ENCODE measurements at regions of chr1 and their contacts with region 1.

Region 1: DNA sequence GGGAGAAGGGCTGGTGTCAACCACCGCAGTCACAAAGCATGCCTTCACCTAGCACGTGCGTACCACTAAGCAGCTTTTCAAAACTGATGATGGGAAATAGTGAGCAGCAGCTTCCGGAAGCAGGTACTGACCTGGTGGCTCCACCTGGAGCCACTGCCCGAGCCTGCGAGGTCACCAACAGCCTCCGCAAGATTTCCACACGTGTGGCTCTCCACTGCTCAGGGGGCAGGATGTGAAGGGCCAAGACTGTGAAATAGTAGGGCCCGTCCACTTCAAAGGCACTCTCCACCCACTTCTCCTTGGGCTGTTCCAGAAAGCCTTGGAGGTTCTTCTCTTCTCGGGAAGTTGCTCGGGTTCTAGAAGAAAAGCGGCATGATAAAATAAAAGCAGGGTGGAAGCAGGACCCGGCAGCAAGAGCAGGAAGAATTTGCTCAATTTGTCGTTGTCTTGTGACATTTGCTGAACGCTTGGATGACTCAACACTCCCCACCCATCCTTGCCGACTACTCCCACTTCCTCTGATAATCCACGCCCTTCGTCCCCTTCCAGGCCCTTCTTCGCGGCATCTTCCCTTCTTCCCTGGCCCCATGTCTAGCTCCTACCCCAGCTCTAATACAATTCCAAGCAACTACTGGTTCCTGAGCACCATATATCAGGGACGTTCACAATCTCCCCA is 124.9 kb upstream of the IFFO2 start:
- DNase-seq: peak; percentile 51
- H3K4me3 ChIP-seq: no peak overlapping the region
- H3K27ac ChIP-seq: peak overlapping the region; percentile 47
- H3K27me3 ChIP-seq: no peaks in the 10 kb centered on the region
- CTCF ChIP-seq: no peak

Region 2: DNA sequence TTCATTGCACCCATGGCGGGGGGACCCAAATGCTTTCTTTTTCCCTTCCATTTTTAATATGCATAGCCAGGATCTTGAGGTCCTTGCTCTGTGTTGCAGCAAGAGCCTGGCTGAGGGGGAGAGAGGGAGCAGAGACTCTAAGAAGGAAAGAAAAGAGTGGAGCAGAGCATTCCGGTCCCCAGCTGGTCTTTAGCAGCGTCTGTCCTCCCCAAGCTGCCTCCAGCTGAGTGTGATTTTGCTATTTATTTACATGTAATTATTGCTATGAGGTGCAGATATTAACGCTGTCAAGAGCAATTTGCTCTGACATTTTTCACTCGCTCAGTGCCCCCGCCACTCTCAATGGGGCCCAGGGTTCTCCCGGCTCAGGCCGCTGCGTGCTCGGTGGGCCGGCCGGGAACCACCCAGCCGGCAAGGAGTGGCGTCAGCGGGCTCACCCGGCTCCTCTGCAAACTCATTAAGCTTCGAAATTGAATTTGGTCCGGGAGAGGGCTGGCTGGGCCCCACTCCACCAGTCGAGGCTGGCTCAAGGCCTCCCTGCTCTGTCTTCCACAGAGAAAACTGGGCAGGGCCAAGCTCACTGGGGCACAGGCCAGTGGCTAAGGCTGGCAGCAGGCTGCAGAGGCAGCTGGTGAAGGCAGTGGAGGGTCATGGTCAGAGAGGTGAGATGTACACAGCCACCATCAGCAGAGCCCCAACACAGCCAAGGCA is 357.5 kb before region 1 on chr1:
- in situ Hi-C with region 1: no loop called
- DNase-seq: no peak
- H3K4me3 ChIP-seq: no peak overlapping the region
- H3K27ac ChIP-seq: no peak overlapping the region
- H3K27me3 ChIP-seq: peaks cover under 1% of the 10 kb centered on the region
- CTCF ChIP-seq: no peak

Region 3: DNA sequence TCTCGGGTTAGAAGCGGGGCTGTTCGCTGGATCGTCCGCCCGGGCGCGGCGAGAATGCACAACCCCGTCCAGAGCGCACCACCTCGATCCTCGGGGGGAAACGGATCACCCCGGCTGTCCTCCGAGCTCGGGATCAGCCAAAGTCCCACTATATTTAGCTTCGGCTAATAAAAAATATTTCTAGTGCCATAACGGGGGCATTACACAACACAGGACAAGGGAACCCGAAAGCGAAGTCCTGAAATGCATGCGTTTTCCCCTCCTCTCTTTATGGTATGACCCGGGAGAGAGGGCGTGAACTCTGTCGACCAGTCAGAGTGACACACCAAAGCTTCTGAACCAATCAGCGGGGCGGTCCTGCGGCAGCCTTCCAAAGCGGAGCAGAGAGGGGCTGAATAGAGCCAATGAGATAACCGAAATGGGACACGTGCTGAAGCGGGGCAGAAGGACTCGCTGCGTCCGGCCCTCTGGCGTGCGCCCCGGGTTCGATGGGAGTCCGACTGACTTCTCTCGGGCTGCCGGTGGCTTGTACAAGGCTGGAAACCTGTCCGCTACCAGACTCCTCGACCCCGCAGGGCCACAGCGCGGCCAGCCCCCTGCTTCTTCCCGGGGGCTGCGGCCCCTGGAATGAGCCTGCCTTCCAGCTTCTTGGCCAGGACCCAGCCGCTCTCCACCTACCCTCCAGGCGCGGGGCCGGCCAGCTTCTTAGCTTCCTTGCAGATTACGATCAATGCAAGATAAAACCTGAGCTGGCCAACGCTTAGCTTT is 178.6 kb before region 1 on chr1 and contains the start of gene ALDH4A1:
- in situ Hi-C with region 1: loop called (anchors 10 kb)
- DNase-seq: peak; percentile 99
- H3K4me3 ChIP-seq: peak within 1 kb of the TSS; percentile 81
- H3K27ac ChIP-seq: peak within 1 kb of the TSS; percentile 90
- H3K27me3 ChIP-seq: no peaks in the 10 kb centered on the region
- CTCF ChIP-seq: no peak

Region 4: GRCh38 chr1:19273106-19273843 is 191.9 kb after region 1 on chr1:
- in situ Hi-C with region 1: no loop called
- DNase-seq: no peak
- H3K4me3 ChIP-seq: no peak overlapping the region
- H3K27ac ChIP-seq: no peak overlapping the region
- H3K27me3 ChIP-seq: peaks cover 2% of the 10 kb centered on the region
- CTCF ChIP-seq: no peak